Upper lobe of right lung (tissue), 1 donor: ENCODE measurements at regions of chr11 and their contacts with region 1.

Region 1: DNA sequence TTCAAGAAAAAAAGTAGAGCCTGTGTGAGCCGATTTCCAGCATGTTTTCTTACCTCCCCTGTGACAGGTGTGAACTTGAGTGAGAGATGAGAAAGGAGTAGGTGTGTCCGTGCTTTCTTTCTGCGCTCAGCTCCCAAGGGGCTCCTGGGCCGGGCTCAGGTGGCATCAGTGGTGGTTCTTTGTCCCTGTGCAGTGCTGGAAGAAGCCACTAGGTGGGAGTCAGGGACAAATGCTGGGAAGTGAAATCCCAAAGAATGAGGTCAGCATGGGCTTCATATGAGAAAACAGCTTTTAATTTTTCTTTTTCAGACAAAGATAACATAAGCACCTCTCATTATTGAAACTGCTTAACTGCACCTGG is 57.8 kb downstream of the PPFIBP2 start:
- DNase-seq: peak; percentile 76
- ATAC-seq: peak; percentile 85
- H3K4me3 ChIP-seq: no peak overlapping the region
- H3K27ac ChIP-seq: peak overlapping the region; percentile 70
- H3K4me1 ChIP-seq: peaks cover 47% of the 10 kb centered on the region
- H3K27me3 ChIP-seq: no peaks in the 10 kb centered on the region
- CTCF ChIP-seq: peak; percentile 95

Region 2: DNA sequence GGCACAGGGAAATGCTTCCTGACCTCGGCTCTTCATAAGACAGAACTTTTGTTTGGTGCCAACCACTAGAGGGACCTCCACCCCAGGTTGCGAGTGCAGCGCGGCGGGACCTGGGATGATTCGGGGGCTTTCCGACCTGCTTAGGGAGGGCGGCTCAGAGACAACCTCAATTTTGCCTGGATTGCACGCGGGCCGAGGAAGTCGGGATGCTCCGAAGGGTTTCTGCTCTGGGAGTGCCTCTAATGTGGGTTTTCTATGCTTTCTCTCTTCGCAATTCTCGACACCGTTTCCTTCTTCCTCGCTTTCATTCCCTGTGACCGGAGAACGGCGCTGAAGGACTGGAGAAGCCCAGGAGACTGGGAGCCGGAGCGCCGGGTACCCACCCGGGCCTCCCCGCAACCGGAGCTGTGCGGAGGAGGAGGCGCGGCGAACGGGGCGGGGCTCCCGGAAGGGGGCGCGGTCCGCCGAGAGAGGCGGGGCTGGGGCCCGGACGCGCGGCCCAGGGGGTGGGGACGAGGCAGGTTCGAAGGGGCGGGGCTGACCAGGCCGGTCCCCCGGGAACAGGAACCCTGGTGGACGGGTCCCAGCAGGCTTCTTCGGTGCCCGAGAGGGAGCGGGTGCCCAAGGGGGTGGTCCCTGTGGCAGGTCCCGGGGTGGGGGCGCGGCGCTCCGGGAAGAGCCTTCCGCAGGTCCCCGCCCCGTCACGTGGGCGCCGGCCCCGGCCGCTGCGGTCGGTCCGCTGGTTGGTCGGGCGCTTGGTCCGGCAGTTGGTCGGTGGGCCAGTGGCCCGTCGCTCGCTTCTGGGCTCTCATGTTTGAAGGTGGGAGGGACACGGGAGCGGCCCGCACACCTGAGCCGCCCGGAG is 58.2 kb before region 1 on chr11 and contains the start of gene PPFIBP2:
- intact Hi-C with region 1: no loop called
- DNase-seq: peak; percentile 92
- ATAC-seq: peak; percentile 94
- H3K4me3 ChIP-seq: peak within 1 kb of the TSS; percentile 67
- H3K27ac ChIP-seq: peak within 1 kb of the TSS; percentile 85
- H3K4me1 ChIP-seq: peaks cover 26% of the 10 kb centered on the region
- H3K27me3 ChIP-seq: no peaks in the 10 kb centered on the region
- CTCF ChIP-seq: peak; percentile 67
- total RNA-seq, gene PPFIBP2: 26.8 TPM

Region 3: GRCh38 chr11:7657306-7658025 is 85.8 kb after region 1 on chr11:
- intact Hi-C with region 1: loop called (anchors 10 kb)
- DNase-seq: no peak
- ATAC-seq: peak; percentile 95
- H3K4me3 ChIP-seq: no peak overlapping the region
- H3K27ac ChIP-seq: no peak overlapping the region
- H3K4me1 ChIP-seq: no peaks in the 10 kb centered on the region
- H3K27me3 ChIP-seq: no peaks in the 10 kb centered on the region
- CTCF ChIP-seq: peak; percentile 53